Right cardiac atrium (tissue), 5 donors: ENCODE measurements at regions of chr12 and their contacts with region 1.

Region 1: GRCh38 chr12:27133022-27133590 is 50.7 kb upstream of the C12orf71 start:
- DNase-seq: no peak
- ATAC-seq: no peak
- H3K4me3 ChIP-seq: no peak overlapping the region
- H3K27ac ChIP-seq: no peak overlapping the region
- H3K4me1 ChIP-seq: no peaks in the 10 kb centered on the region
- H3K27me3 ChIP-seq: no peaks in the 10 kb centered on the region

Region 2: DNA sequence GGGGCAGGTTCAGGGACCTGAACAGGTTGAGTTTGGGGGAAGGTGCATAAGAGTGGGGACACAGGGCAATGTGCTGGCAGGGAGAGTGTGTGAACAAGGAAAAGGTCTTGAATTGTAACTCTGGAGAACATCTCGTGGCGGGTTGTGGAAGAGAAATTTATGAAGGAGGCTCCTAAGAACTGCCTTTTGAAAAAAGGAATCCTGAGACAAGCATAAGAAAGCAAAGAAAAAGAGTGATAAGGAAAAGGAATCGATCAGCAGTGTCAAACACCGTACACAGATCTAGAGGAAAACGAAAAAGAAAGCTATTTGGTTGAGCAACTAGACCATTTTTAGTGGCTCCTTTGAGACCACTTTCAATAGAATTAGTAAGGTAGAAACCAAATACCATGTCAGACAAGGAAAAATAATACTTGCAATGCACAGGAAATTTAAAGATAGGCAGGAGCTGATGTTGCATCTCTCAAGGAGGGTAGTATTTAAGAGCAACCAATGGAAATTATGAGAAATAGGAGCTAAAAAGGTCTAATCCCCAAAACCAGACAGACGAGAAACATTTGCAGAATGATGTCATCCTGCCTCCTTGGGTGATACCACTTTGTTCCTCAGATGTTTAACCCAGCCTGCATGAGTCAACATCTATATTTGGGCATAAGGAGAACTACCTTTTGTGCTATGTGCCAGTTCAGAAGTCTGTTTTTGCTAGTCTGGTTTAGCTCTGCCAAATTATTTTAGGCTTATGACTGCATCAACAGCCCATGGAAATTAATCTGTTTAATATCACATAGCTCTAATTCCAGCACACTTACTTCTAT is 46.5 kb after region 1 on chr12:
- intact Hi-C with region 1: loop called in 1 of 4 experiments (anchors 2 kb)
- DNase-seq: no peak
- ATAC-seq: peak; percentile 85 to 92
- H3K4me3 ChIP-seq: no peak overlapping the region
- H3K27ac ChIP-seq: peak overlapping the region; percentile 50
- H3K4me1 ChIP-seq: no peaks in the 10 kb centered on the region
- H3K27me3 ChIP-seq: no peaks in the 10 kb centered on the region